Head of caudate nucleus (tissue), 42 donors: ENCODE measurements at regions of chr3 and their contacts with region 1.

Region 1: DNA sequence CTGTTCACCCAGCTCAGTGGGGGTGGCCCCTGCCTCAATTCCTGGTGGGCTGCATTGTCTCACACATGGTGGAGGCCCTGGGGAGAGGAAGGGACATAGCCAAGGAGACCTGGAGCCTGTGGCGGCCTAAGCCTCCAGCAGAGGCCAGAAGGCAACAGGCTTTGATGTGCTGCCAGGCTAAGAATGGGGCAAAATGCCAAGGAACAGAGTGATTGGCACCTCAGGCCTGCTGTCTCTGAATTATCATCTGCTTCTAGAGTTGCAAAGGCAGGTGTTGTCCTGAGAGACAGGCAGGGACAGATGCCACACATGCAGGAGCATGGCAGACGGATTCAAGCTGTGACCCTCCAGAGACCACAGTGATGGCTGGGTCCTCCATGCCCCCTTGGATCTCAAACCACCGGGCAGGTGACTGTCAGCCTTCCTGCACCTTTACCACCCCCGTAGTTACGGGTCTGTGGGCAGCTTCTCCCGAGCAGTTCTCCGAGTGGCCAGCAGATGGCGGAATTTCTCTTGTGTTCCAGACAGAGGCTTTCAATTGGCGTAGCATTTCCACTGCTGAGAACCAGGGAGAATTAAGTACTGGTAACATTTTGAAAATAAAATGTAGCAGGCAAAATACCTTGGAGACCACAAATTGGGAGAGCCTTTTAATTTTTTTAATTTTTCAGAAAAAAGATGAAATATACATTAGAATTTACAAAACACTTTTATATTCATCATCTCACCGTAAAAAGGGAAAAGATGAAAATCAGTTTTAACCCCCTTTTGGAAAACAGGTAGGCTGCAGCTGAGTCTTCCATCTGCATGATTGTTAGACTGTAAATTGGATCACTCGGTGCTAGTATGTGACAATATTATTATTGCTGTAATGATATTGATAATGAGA is 525.5 kb upstream of the CFAP20DC start:
- DNase-seq: peak; percentile 66 to 98 (median 94)

Region 2: DNA sequence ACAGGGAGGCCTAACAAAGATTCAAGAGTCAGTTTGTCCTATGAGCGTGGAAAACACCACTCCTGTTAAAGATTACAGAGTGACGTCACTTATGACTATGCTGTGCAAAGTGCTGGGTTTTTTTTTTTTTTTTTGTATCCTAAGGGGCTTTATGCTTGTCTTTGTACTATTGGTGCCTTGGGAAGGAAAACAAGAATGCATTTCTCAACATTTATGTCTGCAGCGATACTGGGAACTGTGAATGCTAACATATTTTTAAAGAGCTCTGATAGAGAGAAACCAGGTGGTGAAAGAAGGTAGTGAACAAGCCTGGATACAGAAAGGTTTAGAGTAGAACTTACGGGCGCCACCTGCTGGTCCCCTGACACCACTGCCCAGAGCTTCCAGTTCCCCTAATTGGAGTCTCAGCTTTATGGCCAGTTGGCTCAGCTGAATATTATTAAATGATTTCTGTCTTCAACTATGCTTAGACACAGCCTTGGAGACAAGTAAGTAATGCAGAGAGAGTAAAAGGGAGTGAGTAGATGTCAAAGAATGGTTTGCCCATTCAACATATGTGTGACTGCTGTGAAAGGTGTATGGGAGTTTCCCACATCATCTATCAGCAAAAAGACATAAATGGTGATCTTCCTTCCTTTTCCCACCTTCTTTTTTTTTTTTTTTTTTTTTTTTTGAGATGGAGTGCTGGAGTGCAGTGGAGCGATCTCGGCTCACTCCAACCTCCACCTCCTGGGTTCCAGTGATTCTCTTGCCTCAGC is 282.4 kb after region 1 on chr3:
- intact Hi-C with region 1: loop called (anchors 5 kb)
- DNase-seq: peak; percentile 62 to 93 (median 82)